CD8-positive, alpha-beta memory T cell (primary cell): ENCODE measurements at regions of chr22 and their contacts with region 1.

Region 1: DNA sequence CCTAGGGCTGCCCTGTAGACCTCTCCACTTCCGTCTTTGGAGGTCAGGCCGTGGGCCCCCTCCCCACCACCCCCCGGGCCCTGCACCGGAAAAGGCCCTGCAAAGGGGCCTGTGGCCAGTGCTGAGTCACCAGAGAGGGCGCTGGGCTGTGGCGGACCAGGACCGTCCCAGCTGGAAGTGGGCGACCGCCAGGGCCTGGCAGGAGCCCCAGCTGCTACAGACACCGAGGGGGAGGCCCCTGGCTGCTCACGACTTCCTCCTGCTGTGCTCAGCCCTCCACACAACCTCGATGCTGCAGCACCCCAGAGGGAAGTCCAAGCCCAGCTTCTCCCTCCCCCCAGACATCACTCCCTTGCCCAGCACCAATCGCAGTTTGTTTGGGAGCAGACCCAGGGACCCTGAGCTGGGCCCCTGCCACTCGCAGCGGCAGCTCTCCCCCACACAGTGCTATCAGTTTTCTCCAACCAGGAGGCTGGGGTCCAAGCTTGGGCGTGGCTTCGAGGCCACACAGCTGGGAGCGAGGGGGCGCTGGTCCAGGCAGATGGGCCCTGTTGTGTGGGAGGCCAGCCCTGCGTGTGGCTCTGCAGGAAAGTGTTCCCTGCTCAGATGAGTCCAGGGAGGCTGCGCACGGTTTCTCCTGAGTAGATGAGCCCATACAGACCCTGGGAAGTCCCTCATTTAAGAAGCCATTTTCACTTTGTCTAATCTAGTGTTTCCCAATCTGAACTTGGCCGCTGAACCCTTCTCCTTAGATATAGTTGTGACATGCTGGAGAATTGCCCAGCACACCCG is 5.6 kb upstream of the SH3BP1 start:
- DNase-seq: peak; percentile 47 to 80 (median 54)
- H3K4me3 ChIP-seq: peak overlapping the region; percentile 50
- H3K4me3 Mint-ChIP-seq: peak overlapping the region; percentile 72 to 95 (median 83)
- H3K27ac ChIP-seq: peak overlapping the region; percentile 59
- H3K27ac Mint-ChIP-seq: peak overlapping the region; percentile 89 to 99 (median 96)
- H3K4me1 ChIP-seq: peaks cover 77% of the 10 kb centered on the region
- H3K4me1 Mint-ChIP-seq: peaks cover 66 to 92% (median 69%) of the 10 kb centered on the region in 3 donors
- H3K27me3 ChIP-seq: no peaks in the 10 kb centered on the region
- H3K27me3 Mint-ChIP-seq: no peaks in the 10 kb centered on the region

Region 2: DNA sequence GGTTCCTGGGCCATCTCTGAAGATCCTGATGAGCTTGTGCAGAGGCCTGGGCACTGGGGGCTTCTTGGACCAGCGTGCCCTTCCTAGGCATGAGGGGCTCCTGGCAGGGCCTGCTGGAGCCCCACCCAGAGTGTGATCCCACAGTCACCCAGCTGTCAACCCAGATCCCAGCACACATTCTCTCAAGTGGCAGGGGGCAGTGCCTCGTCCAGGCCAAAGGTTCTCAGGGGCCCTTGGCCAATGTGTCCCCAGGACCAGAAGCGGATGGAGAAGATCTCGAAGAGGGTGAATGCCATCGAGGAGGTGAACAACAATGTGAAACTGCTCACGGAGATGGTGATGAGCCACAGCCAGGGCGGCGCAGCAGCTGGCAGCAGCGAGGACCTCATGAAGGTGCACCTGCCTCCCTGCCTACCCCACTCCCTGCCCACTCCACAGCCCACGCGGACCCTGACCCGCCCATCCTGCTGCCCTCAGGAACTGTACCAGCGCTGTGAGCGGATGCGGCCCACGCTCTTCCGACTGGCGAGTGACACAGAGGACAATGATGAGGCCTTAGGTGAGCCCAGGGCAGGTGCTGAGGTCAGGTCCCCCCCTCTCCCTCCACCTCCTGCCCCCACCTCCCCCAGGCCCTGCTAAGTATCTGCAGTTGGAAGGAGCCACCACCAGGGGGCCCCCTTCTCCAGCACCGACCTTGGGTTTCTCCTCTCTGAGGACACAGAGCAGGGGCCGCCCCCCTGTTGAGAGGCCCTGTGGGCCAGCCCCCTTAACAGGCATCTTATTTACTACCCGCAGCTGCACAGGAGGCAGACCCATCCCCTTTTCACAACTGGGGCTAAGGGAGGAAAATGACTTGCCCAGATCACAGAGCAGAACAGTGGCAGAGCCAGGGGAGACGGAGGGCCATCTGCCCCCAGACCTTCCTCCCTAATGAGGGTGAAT is 10.5 kb before region 1 on chr22:
- CTCF ChIA-PET with region 1: interaction called, 236 read pairs
- POLR2A ChIA-PET with region 1: interaction called, 25 read pairs
- DNase-seq: peak; percentile 69 to 85 (median 70)
- H3K4me3 ChIP-seq: no peak overlapping the region
- H3K4me3 Mint-ChIP-seq: peak overlapping the region in 6 of 7 donors; percentile 35 to 87 (median 63)
- H3K27ac ChIP-seq: no peak overlapping the region
- H3K27ac Mint-ChIP-seq: peak overlapping the region; percentile 90 to 98 (median 96)
- H3K4me1 ChIP-seq: peaks cover 52% of the 10 kb centered on the region
- H3K4me1 Mint-ChIP-seq: peaks cover 33 to 52% (median 37%) of the 10 kb centered on the region in 3 donors
- H3K27me3 ChIP-seq: no peaks in the 10 kb centered on the region
- H3K27me3 Mint-ChIP-seq: no peaks in the 10 kb centered on the region

Region 3: DNA sequence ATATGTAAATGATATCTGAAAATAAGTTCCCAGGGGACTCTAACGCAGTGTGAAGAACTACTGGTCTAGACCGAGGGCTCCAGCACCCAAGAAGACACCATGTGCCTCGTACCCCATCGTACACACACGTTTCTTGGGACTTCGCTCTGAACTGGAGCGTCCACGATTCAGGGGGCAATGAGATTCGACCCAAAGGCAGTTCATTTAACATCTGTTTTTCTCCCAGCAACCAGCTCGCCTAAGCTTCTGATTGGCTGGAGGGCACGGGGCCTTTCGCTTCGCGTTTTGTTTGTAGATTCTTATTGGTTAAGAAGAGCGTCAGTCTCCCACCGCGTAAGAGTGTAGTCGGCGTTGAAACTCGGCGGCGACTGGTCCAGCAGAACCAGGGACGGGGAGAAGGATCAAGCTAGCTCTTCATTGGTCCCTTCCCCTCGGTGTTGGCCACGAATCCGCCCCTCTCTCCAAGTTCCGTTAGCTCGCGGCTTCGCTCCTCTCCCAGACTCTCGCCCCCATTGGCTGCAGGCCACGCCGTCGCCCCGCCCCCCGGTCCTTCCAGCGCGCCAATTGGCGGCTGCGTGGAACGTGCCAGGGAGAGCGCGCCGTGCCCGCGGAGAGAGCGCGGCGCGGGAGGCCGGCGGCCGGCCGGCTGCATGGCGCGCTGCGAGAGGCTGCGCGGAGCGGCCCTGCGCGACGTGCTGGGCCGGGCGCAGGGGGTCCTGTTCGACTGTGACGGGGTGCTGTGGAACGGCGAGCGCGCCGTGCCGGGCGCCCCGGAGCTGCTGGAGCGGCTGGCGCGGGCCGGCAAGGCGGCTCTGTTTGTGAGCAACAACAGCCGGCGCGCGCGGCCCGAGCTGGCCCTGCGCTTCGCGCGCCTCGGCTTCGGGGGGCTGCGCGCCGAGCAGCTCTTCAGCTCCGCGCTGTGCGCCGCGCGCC is 24.6 kb after region 1 on chr22 and contains the start of gene PDXP:
- CTCF ChIA-PET with region 1: interaction called, 285 read pairs
- POLR2A ChIA-PET with region 1: interaction called, 50 read pairs
- DNase-seq: peak; percentile 96 to 98 (median 97)
- H3K4me3 ChIP-seq: peak within 1 kb of the TSS; percentile 69
- H3K4me3 Mint-ChIP-seq: peak within 1 kb of the TSS; percentile 85 to 91 (median 88)
- H3K27ac ChIP-seq: peak within 1 kb of the TSS; percentile 52
- H3K27ac Mint-ChIP-seq: peak within 1 kb of the TSS; percentile 66 to 97 (median 94)
- H3K4me1 ChIP-seq: peaks cover 31% of the 10 kb centered on the region
- H3K4me1 Mint-ChIP-seq: peaks cover 34 to 44% (median 36%) of the 10 kb centered on the region in 3 donors
- H3K27me3 ChIP-seq: no peaks in the 10 kb centered on the region
- H3K27me3 Mint-ChIP-seq: no peaks in the 10 kb centered on the region
- total RNA-seq, gene PDXP: 36.0 to 37.8 TPM

Region 4: GRCh38 chr22:37686002-37686982 is 52.5 kb after region 1 on chr22 and contains the start of gene NOL12:
- CTCF ChIA-PET with region 1: interaction called, 375 read pairs
- POLR2A ChIA-PET with region 1: interaction called, 3 read pairs
- DNase-seq: peak; percentile 62 to 84 (median 74)
- H3K4me3 ChIP-seq: peak within 1 kb of the TSS; percentile 88
- H3K4me3 Mint-ChIP-seq: peak within 1 kb of the TSS; percentile 83 to 97 (median 94)
- H3K27ac ChIP-seq: peak within 1 kb of the TSS; percentile 83
- H3K27ac Mint-ChIP-seq: peak within 1 kb of the TSS; percentile 32 to 100 (median 96)
- H3K4me1 ChIP-seq: peaks cover 21% of the 10 kb centered on the region
- H3K4me1 Mint-ChIP-seq: peaks cover 26 to 38% (median 34%) of the 10 kb centered on the region in 3 donors
- H3K27me3 ChIP-seq: no peaks in the 10 kb centered on the region
- H3K27me3 Mint-ChIP-seq: peaks cover 0 to 1% of the 10 kb centered on the region in 2 donors
- total RNA-seq, gene NOL12: 53.6 to 57.2 TPM